Posterior cingulate gyrus (tissue), 11 donors: ENCODE measurements at regions of chr10 and their contacts with region 1.

Region 1: GRCh38 chr10:7818295-7819122 is at the start of gene TAF3:
- DNase-seq: peak; percentile 87 to 99 (median 90)

Region 2: GRCh38 chr10:7750222-7750621 is 68.3 kb before region 1 on chr10:
- intact Hi-C with region 1: no loop called
- DNase-seq: no peak

Region 3: DNA sequence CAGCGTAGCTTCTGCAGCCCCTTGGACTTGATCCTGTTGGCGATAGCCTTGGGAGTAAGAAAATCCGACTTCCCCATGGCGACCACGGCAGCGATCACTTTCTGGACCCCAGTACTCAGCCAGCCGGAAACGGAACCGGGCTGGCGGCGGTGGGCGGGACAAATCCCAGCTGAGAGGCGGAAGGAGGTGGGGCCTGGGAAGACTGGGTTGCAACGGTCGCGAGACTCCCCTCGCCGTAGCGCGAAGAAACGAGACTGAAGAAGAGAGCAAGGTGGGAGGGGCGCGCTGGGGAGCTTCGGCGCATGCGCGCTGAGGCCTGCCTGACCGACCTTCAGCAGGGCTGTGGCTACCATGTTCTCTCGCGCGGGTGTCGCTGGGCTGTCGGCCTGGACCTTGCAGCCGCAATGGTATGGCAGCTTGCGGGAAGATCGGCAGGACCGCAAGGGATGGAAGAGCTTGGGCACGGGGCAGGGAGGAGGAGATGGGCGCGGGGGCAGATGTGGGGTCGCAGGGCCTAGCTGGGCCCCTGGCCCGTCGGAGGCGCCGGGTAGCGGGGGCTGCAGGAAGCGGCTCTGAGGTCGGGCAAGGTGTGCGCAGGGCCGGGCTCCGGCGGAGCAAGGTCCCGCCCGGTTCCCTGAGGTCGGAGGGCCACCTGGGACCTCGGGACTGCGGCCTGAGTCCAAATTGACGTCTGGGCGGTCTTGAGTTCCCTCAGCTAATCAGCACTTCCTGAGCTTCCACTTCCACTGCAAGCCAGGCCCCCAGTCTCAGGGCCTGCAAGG is 30.5 kb before region 1 on chr10 and contains the starts of genes ATP5F1C and KIN:
- intact Hi-C with region 1: loop called (anchors 2 kb)
- DNase-seq: peak; percentile 95 to 100 (median 97)